Thyroid gland (tissue), 4 donors: ENCODE measurements at regions of chr17 and their contacts with region 1.

Region 1: DNA sequence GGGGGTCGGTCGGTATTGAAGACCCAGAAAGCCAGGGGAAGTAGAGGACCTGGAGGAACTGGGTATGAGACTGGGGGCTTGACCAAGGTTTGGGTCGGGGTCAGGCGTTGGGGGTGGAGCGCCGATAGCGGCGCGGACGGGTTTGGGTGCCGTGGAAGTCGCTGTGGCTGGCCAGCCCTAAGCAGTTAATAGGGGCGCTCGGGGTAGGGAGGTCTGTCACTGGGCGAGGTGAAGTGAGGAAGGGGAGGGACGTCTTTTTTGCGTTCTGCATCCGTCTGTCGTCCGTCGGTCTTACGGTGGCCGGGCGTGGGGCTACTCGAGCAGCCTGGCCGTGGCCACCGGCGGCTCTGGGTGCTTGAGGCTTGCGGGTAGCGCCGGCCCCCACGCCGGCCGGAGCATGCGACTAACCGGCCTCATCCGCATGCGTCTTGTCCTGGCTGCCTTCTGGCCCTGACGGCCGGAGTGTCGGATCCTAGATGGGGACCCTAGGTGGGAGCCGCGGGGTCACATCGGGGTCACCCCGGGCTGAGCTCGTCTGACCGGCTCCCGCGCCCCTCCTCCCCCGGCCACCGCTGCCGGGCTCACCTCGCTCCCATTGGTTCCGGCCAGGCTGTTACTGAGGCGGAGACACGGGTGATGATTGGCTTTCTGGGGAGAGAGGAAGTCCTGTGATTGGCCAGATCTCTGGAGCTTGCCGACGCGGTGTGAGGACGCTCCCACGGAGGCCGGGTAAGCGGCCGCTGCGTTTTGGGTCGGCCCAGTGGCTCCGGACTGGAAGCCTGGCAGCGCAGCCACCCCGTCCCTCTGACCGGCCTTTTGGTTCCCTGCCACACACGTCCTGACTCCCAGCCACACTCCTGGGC is 10.3 kb upstream of the TMEM88 start:
- DNase-seq: peak; percentile 93
- H3K4me3 ChIP-seq: peak overlapping the region; percentile 55 to 77 (median 67)
- H3K27ac ChIP-seq: peak overlapping the region; percentile 95 to 98 (median 97)
- H3K4me1 ChIP-seq: peaks cover 22 to 25% of the 10 kb centered on the region in 2 donors
- H3K27me3 ChIP-seq: no peaks in the 10 kb centered on the region
- CTCF ChIP-seq: no peak
- POLR2A ChIP-seq: peak in 1 of 2 donors; percentile 94

Region 2: DNA sequence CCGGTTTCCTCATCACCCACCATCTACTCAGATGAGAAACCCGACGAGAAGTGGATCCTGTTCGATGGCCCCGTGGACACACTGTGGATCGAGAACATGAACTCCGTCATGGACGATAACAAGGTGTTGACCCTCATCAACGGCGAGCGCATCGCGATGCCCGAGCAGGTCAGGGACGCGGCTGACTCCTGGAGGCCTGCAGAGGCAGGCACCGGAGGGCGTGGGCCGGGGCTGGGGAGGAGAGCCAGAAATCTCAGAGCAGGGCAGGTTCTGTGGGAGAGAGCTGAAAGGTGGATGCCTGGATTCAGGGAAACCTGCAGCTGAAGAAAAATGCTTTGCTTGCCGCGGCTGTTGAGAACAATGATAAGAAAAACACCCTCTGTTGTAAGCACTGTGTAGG is 57.7 kb before region 1 on chr17:
- intact Hi-C with region 1: no loop called
- DNase-seq: no peak
- H3K4me3 ChIP-seq: no peak overlapping the region
- H3K27ac ChIP-seq: no peak overlapping the region
- H3K4me1 ChIP-seq: peaks cover 0 to 1% of the 10 kb centered on the region in 2 donors
- H3K27me3 ChIP-seq: no peaks in the 10 kb centered on the region
- CTCF ChIP-seq: no peak
- POLR2A ChIP-seq: no peak

Region 3: GRCh38 chr17:8140060-8141029 is 295.8 kb after region 1 on chr17:
- intact Hi-C with region 1: loop called (anchors 10 kb)
- DNase-seq: peak; percentile 55 to 60
- H3K4me3 ChIP-seq: no peak overlapping the region
- H3K27ac ChIP-seq: peak overlapping the region; percentile 50 to 93 (median 66)
- H3K4me1 ChIP-seq: peaks cover 19 to 35% of the 10 kb centered on the region in 2 donors
- H3K27me3 ChIP-seq: no peaks in the 10 kb centered on the region
- CTCF ChIP-seq: no peak
- POLR2A ChIP-seq: no peak